ENCODE measurements at regions of chr7 and their contacts with region 1.

Region 1: DNA sequence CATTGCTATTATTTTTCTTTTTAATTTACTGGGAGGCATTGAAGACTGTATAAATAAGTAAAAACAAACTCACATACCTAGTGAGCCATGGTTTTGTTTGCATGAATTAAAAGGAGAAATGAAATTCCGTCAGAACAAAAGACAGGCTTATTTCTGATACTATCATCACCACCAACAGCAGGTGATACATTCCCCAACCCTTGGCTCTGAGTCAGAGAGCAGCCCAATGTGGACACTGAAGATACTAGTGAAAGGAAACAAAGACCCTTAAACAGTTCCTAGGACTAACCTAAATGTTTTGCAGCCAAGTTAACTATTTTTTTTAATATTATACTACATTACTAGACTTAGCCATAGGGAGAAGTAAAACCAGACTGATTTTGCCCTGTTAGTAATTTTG is 31.6 kb downstream of the CHRM2 start:
- DNase-seq: no peak
- H3K4me3 ChIP-seq: no peak overlapping the region
- H3K27ac ChIP-seq: no peak overlapping the region
- H3K4me1 ChIP-seq: no peaks in the 10 kb centered on the region
- H3K27me3 ChIP-seq: no peaks in the 10 kb centered on the region
- CTCF ChIP-seq: no peak

Region 2: DNA sequence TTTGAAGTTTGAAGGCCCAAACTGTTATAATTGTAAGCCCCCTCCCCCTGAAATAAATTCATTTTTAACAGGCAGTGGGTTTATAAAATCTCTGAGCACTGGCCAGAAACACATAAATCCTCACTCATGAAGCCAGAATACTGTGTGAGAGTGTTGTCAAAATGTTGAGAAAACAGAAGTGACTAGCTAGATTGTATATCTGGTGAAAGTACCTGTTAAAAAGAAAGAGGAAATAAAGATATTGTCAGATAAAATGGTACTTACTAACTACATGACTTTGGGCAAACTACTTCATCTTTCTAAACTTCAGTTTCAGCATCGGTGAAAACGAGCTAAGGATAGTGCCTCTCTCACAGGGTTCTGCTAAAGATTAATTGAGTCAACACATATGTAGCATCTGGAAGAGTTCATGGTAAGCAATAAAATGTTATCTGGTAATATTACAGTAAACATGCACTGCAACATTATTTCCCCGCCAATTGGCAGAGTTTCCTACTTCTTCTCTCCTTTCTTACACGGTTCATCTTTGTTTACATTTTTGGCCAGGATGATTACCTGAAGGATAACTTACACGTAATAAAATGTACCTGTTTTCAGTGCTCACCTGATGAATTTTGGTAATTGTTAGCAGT is 234.0 kb before region 1 on chr7:
- CTCF ChIA-PET with region 1: no interaction called
- POLR2A ChIA-PET with region 1: no interaction called
- intact Hi-C with region 1: no loop called
- DNase-seq: no peak
- H3K4me3 ChIP-seq: no peak overlapping the region
- H3K27ac ChIP-seq: no peak overlapping the region
- H3K4me1 ChIP-seq: no peaks in the 10 kb centered on the region
- H3K27me3 ChIP-seq: no peaks in the 10 kb centered on the region
- CTCF ChIP-seq: no peak

Region 3: GRCh38 chr7:136807598-136807997 is 92.4 kb before region 1 on chr7:
- CTCF ChIA-PET with region 1: no interaction called
- POLR2A ChIA-PET with region 1: no interaction called
- intact Hi-C with region 1: no loop called
- DNase-seq: no peak
- H3K4me3 ChIP-seq: no peak overlapping the region
- H3K27ac ChIP-seq: no peak overlapping the region
- H3K4me1 ChIP-seq: no peaks in the 10 kb centered on the region
- H3K27me3 ChIP-seq: no peaks in the 10 kb centered on the region
- CTCF ChIP-seq: no peak

Region 4: DNA sequence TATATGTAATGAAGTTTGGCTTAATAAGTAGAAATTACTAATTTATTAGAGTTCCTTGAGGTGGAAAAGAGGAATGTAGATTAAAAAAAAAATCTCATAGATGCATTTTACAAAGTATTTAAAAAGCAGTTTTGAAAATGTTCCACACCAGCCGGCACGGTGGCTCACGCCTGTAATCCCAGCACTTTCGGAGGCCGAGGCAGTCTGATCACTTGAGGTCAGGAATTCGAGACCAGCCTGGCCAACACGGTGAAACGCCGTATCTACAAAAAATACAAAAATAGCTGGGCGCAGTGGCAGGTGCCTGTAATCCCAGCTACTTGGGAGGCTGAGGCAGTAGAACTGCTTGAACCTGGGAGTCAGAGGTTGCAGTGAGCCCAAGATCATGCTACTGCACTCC is 34.8 kb before region 1 on chr7:
- CTCF ChIA-PET with region 1: no interaction called
- POLR2A ChIA-PET with region 1: no interaction called
- intact Hi-C with region 1: no loop called
- DNase-seq: no peak
- H3K4me3 ChIP-seq: no peak overlapping the region
- H3K27ac ChIP-seq: no peak overlapping the region
- H3K4me1 ChIP-seq: no peaks in the 10 kb centered on the region
- H3K27me3 ChIP-seq: 0 out of 2 replicates have a peak, but pooled peaks cover 7% of the 10 kb centered on the region
- CTCF ChIP-seq: no peak

Region 5: DNA sequence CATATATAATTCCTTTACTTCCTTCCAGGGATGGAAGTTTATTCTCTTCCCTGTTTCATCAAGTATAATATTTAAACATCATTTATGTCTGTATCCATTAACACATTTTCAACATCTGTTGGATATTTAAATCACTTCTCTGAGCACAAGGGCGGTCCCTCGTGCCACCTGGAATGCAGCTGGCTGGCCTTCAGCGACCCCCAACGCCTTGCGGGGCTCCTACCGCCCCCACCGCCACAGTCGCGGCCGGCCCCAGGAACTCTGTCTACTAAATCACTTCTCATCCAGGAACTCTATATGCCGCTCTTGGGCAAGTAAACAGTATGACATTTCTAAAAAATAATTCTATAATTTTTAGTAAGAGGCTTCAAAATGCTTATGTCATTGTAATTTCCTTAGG is 664.7 kb after region 1 on chr7:
- CTCF ChIA-PET with region 1: no interaction called
- POLR2A ChIA-PET with region 1: interaction called, 10 read pairs
- intact Hi-C with region 1: no loop called
- DNase-seq: no peak
- H3K4me3 ChIP-seq: no peak overlapping the region
- H3K27ac ChIP-seq: no peak overlapping the region
- H3K4me1 ChIP-seq: no peaks in the 10 kb centered on the region
- H3K27me3 ChIP-seq: no peaks in the 10 kb centered on the region
- CTCF ChIP-seq: no peak

Measured in PC-9 (cell line).